HEK293 (cell line): ENCODE measurements at regions of chr1 and their contacts with region 1.

Region 1: DNA sequence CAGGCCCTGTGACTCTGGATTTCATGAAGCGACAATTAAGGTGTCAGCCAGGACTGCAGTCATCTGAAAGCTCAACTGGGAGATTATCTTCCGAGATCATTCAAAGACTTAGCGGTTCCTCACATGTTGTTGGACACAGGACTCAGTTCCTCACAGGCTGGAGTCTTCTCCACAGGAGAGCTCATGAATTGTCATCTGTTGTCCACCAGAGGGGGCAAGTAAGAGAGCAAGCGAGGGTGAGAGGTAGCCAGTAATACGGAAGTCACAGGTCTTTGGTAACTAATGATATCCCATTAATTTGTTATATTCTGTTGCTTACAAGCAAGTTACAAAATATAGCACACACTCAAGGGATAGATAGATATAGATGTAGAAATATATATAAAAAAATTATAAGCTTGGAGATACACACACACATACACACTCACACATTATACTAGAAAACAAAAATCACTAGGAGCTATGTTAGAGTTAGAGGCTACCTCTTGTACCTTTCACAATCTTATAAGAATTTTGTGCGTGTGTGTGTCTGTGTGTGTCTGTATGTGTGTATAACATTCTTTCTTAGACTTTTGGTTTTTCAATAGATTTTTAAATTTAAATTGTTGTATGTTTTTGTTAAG is 1695.3 kb downstream of the BRINP3 start:
- H3K4me3 ChIP-seq: no peak overlapping the region
- H3K27ac ChIP-seq: no peak overlapping the region
- H3K4me1 ChIP-seq: no peaks in the 10 kb centered on the region
- CTCF ChIP-seq: peak; percentile 14; the same call in 1 of the 2 replicates

Region 2: GRCh38 chr1:188769181-188769580 is 13.1 kb before region 1 on chr1:
- CTCF ChIA-PET with region 1: interaction called, 12 read pairs
- POLR2A ChIA-PET with region 1: no interaction called
- H3K4me3 ChIP-seq: no peak overlapping the region
- H3K27ac ChIP-seq: no peak overlapping the region
- H3K4me1 ChIP-seq: no peaks in the 10 kb centered on the region
- CTCF ChIP-seq: no peak